Mammary epithelial cell (primary cell): ENCODE measurements at regions of chr17 and their contacts with region 1.

Region 1: GRCh38 chr17:28726226-28727130 is at the start of gene TLCD1:
- DNase-seq: peak; percentile 95
- H3K4me3 ChIP-seq: peak within 1 kb of the TSS; percentile 78 to 86 (median 79)
- H3K27ac ChIP-seq: peak within 1 kb of the TSS; percentile 96
- H3K4me1 ChIP-seq: peaks cover 53% of the 10 kb centered on the region
- H3K27me3 ChIP-seq: no peaks in the 10 kb centered on the region
- CTCF ChIP-seq: peak; percentile 94 to 99
- total RNA-seq, gene TLCD1: 4.7 to 16.7 TPM

Region 2: GRCh38 chr17:28684963-28685362 is 41.5 kb before region 1 on chr17:
- CTCF ChIA-PET with region 1: no interaction called
- dilution Hi-C with region 1: no loop called
- in situ Hi-C with region 1: no loop called
- intact Hi-C with region 1: no loop called
- DNase-seq: no peak
- H3K4me3 ChIP-seq: no peak overlapping the region
- H3K27ac ChIP-seq: no peak overlapping the region
- H3K4me1 ChIP-seq: no peaks in the 10 kb centered on the region
- H3K27me3 ChIP-seq: no peaks in the 10 kb centered on the region
- CTCF ChIP-seq: no peak

Region 3: GRCh38 chr17:28750178-28751047 is 23.9 kb after region 1 on chr17:
- CTCF ChIA-PET with region 1: interaction called, 49 read pairs
- dilution Hi-C with region 1: no loop called
- in situ Hi-C with region 1: no loop called
- intact Hi-C with region 1: loop called (anchors 1 kb)
- DNase-seq: peak; percentile 84
- H3K4me3 ChIP-seq: no peak overlapping the region
- H3K27ac ChIP-seq: no peak overlapping the region
- H3K4me1 ChIP-seq: peaks cover 29% of the 10 kb centered on the region
- H3K27me3 ChIP-seq: no peaks in the 10 kb centered on the region
- CTCF ChIP-seq: peak; percentile 100

Region 4: GRCh38 chr17:28865946-28866752 is 139.7 kb after region 1 on chr17:
- CTCF ChIA-PET with region 1: no interaction called
- dilution Hi-C with region 1: no loop called
- in situ Hi-C with region 1: no loop called
- intact Hi-C with region 1: no loop called
- DNase-seq: no peak
- H3K4me3 ChIP-seq: no peak overlapping the region
- H3K27ac ChIP-seq: no peak overlapping the region
- H3K4me1 ChIP-seq: no peaks in the 10 kb centered on the region
- H3K27me3 ChIP-seq: no peaks in the 10 kb centered on the region
- CTCF ChIP-seq: no peak

Region 5: GRCh38 chr17:28878981-28879380 is 152.5 kb after region 1 on chr17:
- CTCF ChIA-PET with region 1: interaction called, 5 read pairs
- dilution Hi-C with region 1: no loop called
- in situ Hi-C with region 1: no loop called
- intact Hi-C with region 1: loop called (anchors 1 kb)
- DNase-seq: peak; percentile 61
- H3K4me3 ChIP-seq: no peak overlapping the region
- H3K27ac ChIP-seq: peak overlapping the region; percentile 54
- H3K4me1 ChIP-seq: peaks cover 39% of the 10 kb centered on the region
- H3K27me3 ChIP-seq: no peaks in the 10 kb centered on the region
- CTCF ChIP-seq: peak; percentile 54 to 69

Region 6: GRCh38 chr17:28916302-28916934 is 189.9 kb after region 1 on chr17:
- CTCF ChIA-PET with region 1: no interaction called
- dilution Hi-C with region 1: no loop called
- in situ Hi-C with region 1: no loop called
- intact Hi-C with region 1: loop called (anchors 1 kb)
- DNase-seq: no peak
- H3K4me3 ChIP-seq: no peak overlapping the region
- H3K27ac ChIP-seq: no peak overlapping the region
- H3K4me1 ChIP-seq: no peaks in the 10 kb centered on the region
- H3K27me3 ChIP-seq: no peaks in the 10 kb centered on the region
- CTCF ChIP-seq: peak; percentile 45 to 54

Region 7: GRCh38 chr17:29116804-29117772 is 390.6 kb after region 1 on chr17:
- CTCF ChIA-PET with region 1: interaction called, 16 read pairs
- dilution Hi-C with region 1: no loop called
- in situ Hi-C with region 1: loop called in 1 of 2 experiments (anchors 25 kb)
- intact Hi-C with region 1: loop called (anchors 2 kb)
- DNase-seq: peak; percentile 27
- H3K4me3 ChIP-seq: no peak overlapping the region
- H3K27ac ChIP-seq: no peak overlapping the region
- H3K4me1 ChIP-seq: no peaks in the 10 kb centered on the region
- H3K27me3 ChIP-seq: no peaks in the 10 kb centered on the region
- CTCF ChIP-seq: peak; percentile 90 to 91